ENCODE measurements at regions of chr10 and their contacts with region 1.

Region 1: GRCh38 chr10:101305320-101306241 is 48.4 kb upstream of the BTRC start:
- DNase-seq: no peak
- ATAC-seq: no peak
- H3K4me3 ChIP-seq: no peak overlapping the region
- H3K27ac ChIP-seq: no peak overlapping the region
- H3K4me1 ChIP-seq: no peaks in the 10 kb centered on the region
- H3K27me3 ChIP-seq: peaks cover 0 to 5% (median 2%) of the 10 kb centered on the region in 3 donors
- CTCF ChIP-seq: no peak

Region 2: GRCh38 chr10:101214446-101215396 is 90.9 kb before region 1 on chr10:
- intact Hi-C with region 1: no loop called
- DNase-seq: peak; percentile 66 to 84
- ATAC-seq: peak; percentile 76 to 92 (median 88)
- H3K4me3 ChIP-seq: peak overlapping the region; percentile 61
- H3K27ac ChIP-seq: no peak overlapping the region
- H3K4me1 ChIP-seq: peaks cover 3% of the 10 kb centered on the region
- H3K27me3 ChIP-seq: peaks cover 0 to 16% (median 2%) of the 10 kb centered on the region in 3 donors
- CTCF ChIP-seq: peak; percentile 91

Region 3: GRCh38 chr10:101429423-101429822 is 123.8 kb after region 1 on chr10:
- intact Hi-C with region 1: no loop called
- DNase-seq: no peak
- ATAC-seq: no peak
- H3K4me3 ChIP-seq: no peak overlapping the region
- H3K27ac ChIP-seq: no peak overlapping the region
- H3K4me1 ChIP-seq: peaks cover 5% of the 10 kb centered on the region
- H3K27me3 ChIP-seq: no peaks in the 10 kb centered on the region
- CTCF ChIP-seq: no peak

Region 4: GRCh38 chr10:101441541-101442455 is 136.2 kb after region 1 on chr10:
- intact Hi-C with region 1: loop called (anchors 2 kb)
- DNase-seq: no peak
- ATAC-seq: peak; percentile 89 to 95 (median 92)
- H3K4me3 ChIP-seq: no peak overlapping the region
- H3K27ac ChIP-seq: no peak overlapping the region
- H3K4me1 ChIP-seq: peaks cover 26% of the 10 kb centered on the region
- H3K27me3 ChIP-seq: no peaks in the 10 kb centered on the region
- CTCF ChIP-seq: peak; percentile 51

Region 5: DNA sequence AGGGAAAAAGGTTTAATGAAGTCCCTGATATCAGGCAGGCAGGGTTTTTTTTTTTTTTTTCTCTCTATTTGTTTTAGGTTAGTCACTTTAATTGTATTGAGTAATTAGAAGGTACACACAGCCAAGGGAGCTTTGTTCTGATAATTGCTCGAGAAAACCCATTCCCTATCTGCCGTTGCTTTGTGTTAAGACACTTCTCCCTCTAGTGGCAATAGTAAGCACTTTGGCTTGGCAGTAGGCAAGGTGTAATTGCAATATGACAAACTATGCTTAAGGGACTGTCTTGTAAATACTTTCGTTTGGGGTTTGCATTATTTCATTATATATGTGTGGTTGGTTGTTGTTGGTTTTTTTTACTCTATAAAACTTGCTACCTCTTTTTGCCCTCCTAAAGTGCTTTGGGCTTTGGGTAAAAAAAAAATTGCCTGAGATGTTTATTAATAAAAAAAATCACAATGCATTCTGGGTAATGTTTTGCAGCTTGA is 161.7 kb after region 1 on chr10:
- intact Hi-C with region 1: loop called in 1 of 2 experiments (anchors 2 kb)
- DNase-seq: no peak
- ATAC-seq: peak; percentile 65 to 94 (median 82)
- H3K4me3 ChIP-seq: peak overlapping the region; percentile 33
- H3K27ac ChIP-seq: no peak overlapping the region
- H3K4me1 ChIP-seq: no peaks in the 10 kb centered on the region
- H3K27me3 ChIP-seq: no peaks in the 10 kb centered on the region
- CTCF ChIP-seq: peak; percentile 78

Region 6: DNA sequence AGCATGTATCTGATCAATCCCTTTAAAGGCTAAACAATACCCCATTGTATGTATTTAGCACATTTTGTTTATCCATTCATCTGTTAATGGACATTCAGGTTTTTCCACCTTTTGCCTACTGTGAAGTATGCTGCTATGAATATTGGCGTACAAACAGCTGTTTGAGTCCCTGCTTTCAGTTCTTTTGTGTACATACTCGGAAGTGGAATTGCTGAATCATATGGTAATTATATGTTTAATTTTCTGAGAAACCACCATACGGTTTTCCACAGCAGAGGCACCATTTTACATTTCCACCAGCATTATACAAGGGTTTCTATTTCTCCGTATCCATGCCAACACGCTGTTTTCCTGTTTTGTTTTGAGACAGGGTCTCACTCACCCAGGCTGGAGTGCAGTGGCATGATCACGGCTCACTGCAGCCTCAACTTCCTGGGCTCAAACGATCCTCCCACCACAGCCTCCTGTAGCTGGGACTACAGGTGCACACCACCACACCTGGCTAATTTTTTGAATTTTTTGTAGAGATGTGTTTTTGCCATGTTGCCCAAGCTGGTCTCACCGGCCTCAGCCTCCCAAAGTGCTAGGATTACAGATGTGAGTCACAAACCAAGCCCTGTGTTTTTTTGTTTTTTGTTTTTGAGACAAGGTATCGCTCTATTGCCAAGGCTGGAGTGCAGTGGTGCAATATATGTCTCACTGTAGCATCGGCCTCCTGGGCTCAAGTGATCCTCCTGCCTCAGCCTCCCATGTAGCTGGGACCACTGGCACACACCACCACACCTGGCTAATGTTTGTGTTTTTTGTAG is 411.5 kb after region 1 on chr10:
- intact Hi-C with region 1: no loop called
- DNase-seq: no peak
- ATAC-seq: no peak
- H3K4me3 ChIP-seq: no peak overlapping the region
- H3K27ac ChIP-seq: no peak overlapping the region
- H3K4me1 ChIP-seq: no peaks in the 10 kb centered on the region
- H3K27me3 ChIP-seq: no peaks in the 10 kb centered on the region
- CTCF ChIP-seq: no peak